ENCODE measurements at regions of chr1 and their contacts with region 1.

Region 1: GRCh38 chr1:156601122-156601830 is at the start of gene GPATCH4:
- ATAC-seq: peak; percentile 86 to 94 (median 92)
- H3K4me3 ChIP-seq: peak within 1 kb of the TSS; percentile 53 to 97 (median 71)
- H3K27ac ChIP-seq: peak within 1 kb of the TSS; percentile 43 to 70
- H3K4me1 ChIP-seq: peaks cover 9 to 14% of the 10 kb centered on the region in 2 donors
- total RNA-seq, gene GPATCH4: 14.7 to 50.1 (median 30.5) TPM

Region 2: DNA sequence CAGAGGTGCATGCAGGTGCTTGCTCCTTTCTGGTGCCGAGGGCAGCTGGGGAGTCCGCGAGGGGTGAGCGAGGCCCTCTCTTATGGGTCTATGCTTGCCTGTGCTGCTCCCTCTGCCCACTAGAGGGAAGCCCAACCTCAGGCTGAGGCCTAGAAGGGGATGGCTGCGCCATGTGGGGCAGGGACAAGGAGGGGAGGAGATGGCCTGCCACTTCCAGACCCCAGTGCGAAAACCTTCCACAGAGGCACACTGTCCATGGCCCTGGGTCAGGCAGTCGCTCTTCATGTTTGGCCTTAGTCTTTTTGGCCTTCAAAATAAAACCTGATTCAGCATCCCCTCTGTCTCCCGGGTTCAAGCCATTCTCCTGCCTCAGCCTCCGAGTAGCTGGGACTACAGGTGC is 218.3 kb before region 1 on chr1:
- in situ Hi-C with region 1: loop called in 2 of 9 experiments (anchors 25 kb)
- ATAC-seq: peak; percentile 74 to 93 (median 88)
- H3K4me3 ChIP-seq: no peak overlapping the region
- H3K27ac ChIP-seq: no peak overlapping the region
- H3K4me1 ChIP-seq: peaks cover 9% of the 10 kb centered on the region in 2 donors

Region 3: DNA sequence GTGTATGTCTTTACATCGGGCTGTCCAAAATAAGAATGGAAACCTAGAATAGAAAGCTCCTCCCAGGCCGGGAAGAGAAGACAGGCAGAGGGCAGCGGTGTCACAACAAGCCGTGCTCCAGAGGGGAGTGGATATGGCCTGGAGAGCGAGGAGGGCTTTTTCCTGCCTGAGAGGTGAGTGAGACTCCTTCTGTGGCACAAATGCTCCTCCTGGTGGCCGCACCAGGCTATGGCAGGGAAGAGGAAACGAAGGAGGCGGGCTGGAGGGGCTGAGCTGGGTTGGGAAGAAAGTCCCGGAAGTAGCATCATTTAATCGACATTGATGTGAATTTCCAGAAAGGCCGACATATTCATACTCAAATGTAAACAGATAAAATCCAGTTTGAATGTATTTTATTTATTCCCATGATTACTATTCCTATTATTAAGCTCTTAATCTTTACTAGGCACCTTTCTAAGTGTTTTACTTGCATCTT is 155.4 kb before region 1 on chr1:
- in situ Hi-C with region 1: loop called in 2 of 9 experiments (anchors 10 to 25 kb)
- ATAC-seq: peak; percentile 84 to 98 (median 92)
- H3K4me3 ChIP-seq: no peak overlapping the region
- H3K27ac ChIP-seq: no peak overlapping the region
- H3K4me1 ChIP-seq: no peaks in the 10 kb centered on the region

Region 4: DNA sequence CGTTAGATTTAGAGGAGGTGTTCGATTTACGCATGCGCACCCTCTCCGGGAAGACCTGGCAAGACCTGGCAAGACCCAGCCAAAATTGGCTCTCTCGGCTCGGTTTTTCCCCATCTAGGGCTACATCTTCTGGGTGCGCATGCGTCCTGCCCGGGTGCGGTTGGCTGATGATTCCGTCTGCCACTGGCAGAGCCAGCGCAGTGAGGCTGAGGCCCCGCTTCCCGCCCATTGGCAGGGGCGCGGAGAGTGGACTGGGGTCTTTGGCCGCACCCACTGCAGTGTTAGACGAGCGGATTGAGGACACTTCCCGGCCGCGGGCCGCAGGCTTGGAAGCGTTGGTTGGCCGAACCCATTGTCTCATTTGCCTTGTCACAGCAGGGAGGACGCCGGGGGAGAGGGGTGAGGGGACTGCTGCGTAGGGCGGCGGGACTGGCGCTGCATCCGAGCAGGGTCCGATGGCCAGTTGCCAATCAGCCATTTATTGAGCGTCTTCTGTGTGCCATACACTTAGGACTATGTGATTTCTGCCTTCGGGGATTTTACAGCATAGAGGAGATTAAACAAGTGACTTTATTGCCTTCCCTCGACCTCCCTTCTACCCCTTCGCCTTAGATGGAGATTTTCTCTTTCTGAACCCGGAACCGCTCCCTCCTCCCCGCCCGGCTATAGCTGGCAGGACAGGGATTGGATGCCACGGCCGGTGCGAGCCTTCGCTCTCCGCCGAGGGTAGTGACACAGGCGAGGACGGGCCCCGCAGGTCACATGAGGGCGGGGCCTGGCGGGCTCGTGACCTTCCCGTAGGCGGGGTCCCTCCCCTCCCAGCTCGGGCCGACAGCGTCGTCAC is 144.4 kb before region 1 on chr1:
- in situ Hi-C with region 1: loop called in 1 of 9 experiments (anchors 10 kb)
- ATAC-seq: peak; percentile 75 to 87 (median 84)
- H3K4me3 ChIP-seq: peak overlapping the region; percentile 33 to 44 (median 42)
- H3K27ac ChIP-seq: peak overlapping the region; percentile 87 to 92
- H3K4me1 ChIP-seq: peaks cover 4 to 6% of the 10 kb centered on the region in 2 donors

Region 5: DNA sequence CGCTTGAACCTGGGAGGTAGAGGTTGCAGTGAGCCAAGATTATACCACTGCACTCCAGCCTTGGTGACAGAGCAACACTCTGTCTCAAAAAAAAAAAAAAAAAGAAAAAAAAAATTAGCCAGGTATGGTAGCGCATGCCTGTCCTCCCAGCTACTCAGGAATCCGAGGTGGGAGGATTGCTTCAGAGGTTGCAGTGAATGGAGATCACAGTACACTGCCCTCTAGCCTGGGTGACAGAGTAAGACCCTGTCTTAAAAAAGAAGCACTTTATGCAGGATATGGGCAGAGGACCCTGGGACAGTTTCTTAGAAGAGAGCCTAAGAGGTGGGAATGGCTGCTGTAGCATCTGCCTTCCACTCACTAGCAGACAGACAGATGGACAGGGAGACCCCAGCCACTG is 51.9 kb before region 1 on chr1:
- in situ Hi-C with region 1: no loop called
- ATAC-seq: peak in 2 of 8 experiments; percentile 3 to 20
- H3K4me3 ChIP-seq: no peak overlapping the region
- H3K27ac ChIP-seq: no peak overlapping the region
- H3K4me1 ChIP-seq: no peaks in the 10 kb centered on the region

Measured in motor neuron (in vitro differentiated cells).